PC-9 (cell line): ENCODE measurements at regions of chrX and their contacts with region 1.

Region 1: GRCh38 chrX:130726661-130727060 is 176.3 kb downstream of the ENOX2 start:
- DNase-seq: peak in 1 of 2 experiments; percentile 64
- H3K4me3 ChIP-seq: no peak overlapping the region
- H3K27ac ChIP-seq: peak overlapping the region; percentile 2; the same call in 1 of the 2 replicates
- H3K4me1 ChIP-seq: peaks cover 3% of the 10 kb centered on the region; the same call in 1 of the 2 replicates
- H3K27me3 ChIP-seq: no peaks in the 10 kb centered on the region
- CTCF ChIP-seq: no peak

Region 2: DNA sequence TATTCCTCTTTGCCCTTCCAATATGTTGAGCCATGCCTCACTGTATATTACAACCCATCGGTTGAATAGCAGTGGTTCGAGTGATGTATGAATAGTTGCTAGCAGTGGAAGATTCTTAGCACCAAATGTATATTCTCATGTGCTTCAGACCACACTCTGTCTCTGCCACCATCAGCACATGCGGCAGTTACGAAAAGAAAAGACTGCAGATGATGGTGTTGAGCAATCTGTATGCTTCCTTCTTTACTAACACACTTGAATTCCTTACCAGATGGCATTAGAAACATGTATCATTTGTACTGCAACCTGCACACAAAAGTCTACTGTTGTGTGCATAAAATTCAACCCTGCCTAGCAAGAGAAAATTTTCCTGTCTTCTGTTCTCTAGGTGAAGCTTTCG is 38.3 kb before region 1 on chrX:
- CTCF ChIA-PET with region 1: no interaction called
- POLR2A ChIA-PET with region 1: interaction called, 10 read pairs
- intact Hi-C with region 1: no loop called
- DNase-seq: no peak
- H3K4me3 ChIP-seq: no peak overlapping the region
- H3K27ac ChIP-seq: no peak overlapping the region
- H3K4me1 ChIP-seq: peaks cover under 1% of the 10 kb centered on the region; the same call in 1 of the 2 replicates
- H3K27me3 ChIP-seq: no peaks in the 10 kb centered on the region
- CTCF ChIP-seq: no peak

Region 3: GRCh38 chrX:130810561-130810960 is 83.9 kb after region 1 on chrX:
- CTCF ChIA-PET with region 1: no interaction called
- POLR2A ChIA-PET with region 1: no interaction called
- intact Hi-C with region 1: no loop called
- DNase-seq: no peak
- H3K4me3 ChIP-seq: no peak overlapping the region
- H3K27ac ChIP-seq: no peak overlapping the region
- H3K4me1 ChIP-seq: peaks cover 15% of the 10 kb centered on the region; the same call in 1 of the 2 replicates
- H3K27me3 ChIP-seq: no peaks in the 10 kb centered on the region
- CTCF ChIP-seq: no peak